GM12878 (cell line): ENCODE measurements at regions of chr17 and their contacts with region 1.

Region 1: GRCh38 chr17:67376737-67377487 is at the start of gene PITPNC1:
- DNase-seq: no peak
- ATAC-seq: peak; percentile 84
- H3K4me3 ChIP-seq: peak within 1 kb of the TSS; percentile 88
- H3K27ac ChIP-seq: peak within 1 kb of the TSS; percentile 87
- H3K4me1 ChIP-seq: no peaks in the 10 kb centered on the region; the same call in 1 of the 2 replicates
- H3K27me3 ChIP-seq: no peaks in the 10 kb centered on the region
- CTCF ChIP-seq: no peak
- EP300 ChIP-seq: no peak
- POLR2A ChIP-seq: peak; percentile 82
- RAD21 ChIP-seq: no peak
- polyA plus RNA-seq, gene PITPNC1: 12.2 to 24.6 TPM

Region 2: GRCh38 chr17:67148352-67148751 is 228.6 kb before region 1 on chr17:
- CTCF ChIA-PET with region 1: no interaction called
- POLR2A ChIA-PET with region 1: no interaction called
- RAD21 ChIA-PET with region 1: no interaction called
- SMC1A ChIA-PET with region 1: no interaction called
- in situ Hi-C with region 1: no loop called
- intact Hi-C with region 1: no loop called
- DNase-seq: no peak
- ATAC-seq: no peak
- H3K4me3 ChIP-seq: no peak overlapping the region
- H3K27ac ChIP-seq: no peak overlapping the region
- H3K4me1 ChIP-seq: no peaks in the 10 kb centered on the region
- H3K27me3 ChIP-seq: no peaks in the 10 kb centered on the region
- CTCF ChIP-seq: no peak
- EP300 ChIP-seq: no peak
- POLR2A ChIP-seq: no peak
- RAD21 ChIP-seq: no peak

Region 3: DNA sequence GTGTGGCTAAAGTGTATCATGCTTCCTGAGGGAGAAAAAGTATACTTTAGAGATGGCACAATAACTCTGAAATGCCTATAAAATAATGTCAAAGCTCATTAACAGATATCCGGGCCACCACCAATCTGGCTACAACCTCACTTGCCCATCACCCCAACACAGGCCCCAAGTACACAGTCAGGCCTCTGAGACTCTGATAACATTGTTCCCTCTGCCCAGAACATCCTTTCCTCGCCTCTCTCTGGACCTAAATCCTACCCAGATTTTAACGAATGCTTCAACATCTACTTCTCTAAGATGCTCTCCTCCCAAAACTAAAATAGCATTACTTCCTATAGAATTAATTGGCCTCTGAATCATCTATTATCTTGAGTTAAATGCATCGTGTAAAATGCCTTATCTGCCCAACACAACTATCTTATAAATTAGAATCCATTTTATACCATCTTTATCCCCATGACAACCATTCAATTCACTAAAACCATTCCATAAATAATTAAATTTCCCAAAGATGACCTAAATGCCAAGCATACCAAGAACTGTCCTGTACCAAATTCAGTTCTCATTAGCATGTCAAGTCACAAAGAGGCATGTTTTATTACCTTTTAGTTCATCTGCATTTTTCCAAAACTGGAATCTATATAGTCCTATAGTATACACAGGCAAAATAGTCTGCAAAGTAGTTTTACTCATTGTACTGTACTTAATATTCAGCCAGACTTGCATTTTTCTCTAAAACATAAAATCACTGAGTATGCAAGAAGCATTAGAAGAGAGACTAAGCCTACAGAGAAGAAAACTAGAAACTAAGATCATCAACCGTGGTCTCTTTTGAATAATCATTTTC is 147.6 kb before region 1 on chr17:
- CTCF ChIA-PET with region 1: no interaction called
- POLR2A ChIA-PET with region 1: no interaction called
- RAD21 ChIA-PET with region 1: no interaction called
- SMC1A ChIA-PET with region 1: no interaction called
- in situ Hi-C with region 1: no loop called
- intact Hi-C with region 1: no loop called
- DNase-seq: no peak
- ATAC-seq: no peak
- H3K4me3 ChIP-seq: no peak overlapping the region
- H3K27ac ChIP-seq: no peak overlapping the region
- H3K4me1 ChIP-seq: no peaks in the 10 kb centered on the region
- H3K27me3 ChIP-seq: no peaks in the 10 kb centered on the region
- CTCF ChIP-seq: no peak
- EP300 ChIP-seq: no peak
- POLR2A ChIP-seq: no peak
- RAD21 ChIP-seq: no peak

Region 4: GRCh38 chr17:67310406-67310805 is 66.5 kb before region 1 on chr17:
- CTCF ChIA-PET with region 1: no interaction called
- POLR2A ChIA-PET with region 1: no interaction called
- RAD21 ChIA-PET with region 1: no interaction called
- SMC1A ChIA-PET with region 1: no interaction called
- in situ Hi-C with region 1: no loop called
- intact Hi-C with region 1: no loop called
- DNase-seq: no peak
- ATAC-seq: no peak
- H3K4me3 ChIP-seq: no peak overlapping the region
- H3K27ac ChIP-seq: no peak overlapping the region
- H3K4me1 ChIP-seq: peaks cover 7% of the 10 kb centered on the region
- H3K27me3 ChIP-seq: no peaks in the 10 kb centered on the region
- CTCF ChIP-seq: no peak
- EP300 ChIP-seq: no peak
- POLR2A ChIP-seq: no peak
- RAD21 ChIP-seq: no peak

Region 5: GRCh38 chr17:67366193-67367157 is 10.4 kb before region 1 on chr17 and contains the start of gene PSMD12:
- CTCF ChIA-PET with region 1: interaction called, 45 read pairs
- POLR2A ChIA-PET with region 1: interaction called, 7 read pairs
- RAD21 ChIA-PET with region 1: interaction called, 8 read pairs
- SMC1A ChIA-PET with region 1: interaction called, 25 read pairs
- in situ Hi-C with region 1: no loop called
- intact Hi-C with region 1: no loop called
- DNase-seq: peak; percentile 63
- ATAC-seq: peak; percentile 94
- H3K4me3 ChIP-seq: peak within 1 kb of the TSS; percentile 98
- H3K27ac ChIP-seq: peak within 1 kb of the TSS; percentile 80
- H3K4me1 ChIP-seq: peaks cover 6% of the 10 kb centered on the region; the same call in 1 of the 2 replicates
- H3K27me3 ChIP-seq: no peaks in the 10 kb centered on the region
- CTCF ChIP-seq: no peak
- EP300 ChIP-seq: no peak
- POLR2A ChIP-seq: peak; percentile 99
- RAD21 ChIP-seq: no peak
- polyA plus RNA-seq, gene PSMD12: 21.2 to 33.0 TPM

Region 6: GRCh38 chr17:67469208-67469895 is 92.4 kb after region 1 on chr17:
- CTCF ChIA-PET with region 1: interaction called, 291 read pairs
- POLR2A ChIA-PET with region 1: interaction called, 4 read pairs
- RAD21 ChIA-PET with region 1: interaction called, 74 read pairs
- SMC1A ChIA-PET with region 1: interaction called, 100 read pairs
- in situ Hi-C with region 1: loop called (anchors 10 kb)
- intact Hi-C with region 1: no loop called
- DNase-seq: no peak
- ATAC-seq: no peak
- H3K4me3 ChIP-seq: no peak overlapping the region
- H3K27ac ChIP-seq: no peak overlapping the region
- H3K4me1 ChIP-seq: peaks cover 26% of the 10 kb centered on the region
- H3K27me3 ChIP-seq: no peaks in the 10 kb centered on the region
- CTCF ChIP-seq: no peak
- EP300 ChIP-seq: no peak
- POLR2A ChIP-seq: no peak
- RAD21 ChIP-seq: no peak

Region 7: GRCh38 chr17:67559377-67559966 is 182.6 kb after region 1 on chr17:
- CTCF ChIA-PET with region 1: interaction called, 14 read pairs
- POLR2A ChIA-PET with region 1: no interaction called
- RAD21 ChIA-PET with region 1: interaction called, 18 read pairs
- SMC1A ChIA-PET with region 1: interaction called, 7 read pairs
- in situ Hi-C with region 1: no loop called
- intact Hi-C with region 1: loop called (anchors 5 kb)
- DNase-seq: no peak
- ATAC-seq: peak; percentile 90
- H3K4me3 ChIP-seq: no peak overlapping the region
- H3K27ac ChIP-seq: no peak overlapping the region
- H3K4me1 ChIP-seq: peaks cover 5% of the 10 kb centered on the region
- H3K27me3 ChIP-seq: no peaks in the 10 kb centered on the region
- CTCF ChIP-seq: peak; percentile 53 to 66 (median 60)
- EP300 ChIP-seq: no peak
- POLR2A ChIP-seq: no peak
- RAD21 ChIP-seq: peak; percentile 65

Region 8: GRCh38 chr17:67594115-67594880 is 217.4 kb after region 1 on chr17:
- CTCF ChIA-PET with region 1: interaction called, 19 read pairs
- POLR2A ChIA-PET with region 1: interaction called, 4 read pairs
- RAD21 ChIA-PET with region 1: interaction called, 10 read pairs
- SMC1A ChIA-PET with region 1: interaction called, 10 read pairs
- in situ Hi-C with region 1: no loop called
- intact Hi-C with region 1: no loop called
- DNase-seq: peak; percentile 82
- ATAC-seq: peak; percentile 88
- H3K4me3 ChIP-seq: no peak overlapping the region
- H3K27ac ChIP-seq: peak overlapping the region; percentile 82
- H3K4me1 ChIP-seq: peaks cover 20% of the 10 kb centered on the region
- H3K27me3 ChIP-seq: no peaks in the 10 kb centered on the region
- CTCF ChIP-seq: no peak
- EP300 ChIP-seq: peak; percentile 5 to 6; a peak in 1 of 4 replicates
- POLR2A ChIP-seq: no peak
- RAD21 ChIP-seq: peak; percentile 39; the same call in 1 of the 2 replicates

Region 9: GRCh38 chr17:67647482-67647881 is 270.6 kb after region 1 on chr17:
- CTCF ChIA-PET with region 1: interaction called, 17 read pairs
- POLR2A ChIA-PET with region 1: interaction called, 3 read pairs
- RAD21 ChIA-PET with region 1: interaction called, 17 read pairs
- SMC1A ChIA-PET with region 1: interaction called, 22 read pairs
- in situ Hi-C with region 1: no loop called
- intact Hi-C with region 1: no loop called
- DNase-seq: peak; percentile 67
- ATAC-seq: peak; percentile 59
- H3K4me3 ChIP-seq: no peak overlapping the region
- H3K27ac ChIP-seq: peak overlapping the region; percentile 92
- H3K4me1 ChIP-seq: peaks cover 60% of the 10 kb centered on the region
- H3K27me3 ChIP-seq: no peaks in the 10 kb centered on the region
- CTCF ChIP-seq: no peak
- EP300 ChIP-seq: peak in 1 of 2 experiments; percentile 78; a peak in 2 of 4 replicates
- POLR2A ChIP-seq: no peak
- RAD21 ChIP-seq: peak; percentile 34; the same call in 1 of the 2 replicates

Region 10: GRCh38 chr17:67779098-67779672 is 402.3 kb after region 1 on chr17:
- CTCF ChIA-PET with region 1: interaction called, 13 read pairs
- POLR2A ChIA-PET with region 1: no interaction called
- RAD21 ChIA-PET with region 1: interaction called, 7 read pairs
- SMC1A ChIA-PET with region 1: interaction called, 4 read pairs
- in situ Hi-C with region 1: no loop called
- intact Hi-C with region 1: loop called (anchors 10 kb)
- DNase-seq: no peak
- ATAC-seq: peak; percentile 94
- H3K4me3 ChIP-seq: no peak overlapping the region
- H3K27ac ChIP-seq: no peak overlapping the region
- H3K4me1 ChIP-seq: no peaks in the 10 kb centered on the region
- H3K27me3 ChIP-seq: no peaks in the 10 kb centered on the region; a peak in 1 of 4 replicates
- CTCF ChIP-seq: peak; percentile 37 to 76 (median 65)
- EP300 ChIP-seq: no peak
- POLR2A ChIP-seq: no peak
- RAD21 ChIP-seq: peak; percentile 62